ENCODE measurements at regions of chr16 and their contacts with region 1.

Region 1: GRCh38 chr16:48623304-48624016 is 13.5 kb upstream of the N4BP1 start:
- DNase-seq: peak; percentile 84
- ATAC-seq: peak; percentile 96
- H3K4me3 Mint-ChIP-seq: peak overlapping the region; percentile 77
- H3K27ac Mint-ChIP-seq: peak overlapping the region; percentile 73
- H3K4me1 Mint-ChIP-seq: peaks cover 48% of the 10 kb centered on the region
- H3K27me3 Mint-ChIP-seq: no peaks in the 10 kb centered on the region

Region 2: DNA sequence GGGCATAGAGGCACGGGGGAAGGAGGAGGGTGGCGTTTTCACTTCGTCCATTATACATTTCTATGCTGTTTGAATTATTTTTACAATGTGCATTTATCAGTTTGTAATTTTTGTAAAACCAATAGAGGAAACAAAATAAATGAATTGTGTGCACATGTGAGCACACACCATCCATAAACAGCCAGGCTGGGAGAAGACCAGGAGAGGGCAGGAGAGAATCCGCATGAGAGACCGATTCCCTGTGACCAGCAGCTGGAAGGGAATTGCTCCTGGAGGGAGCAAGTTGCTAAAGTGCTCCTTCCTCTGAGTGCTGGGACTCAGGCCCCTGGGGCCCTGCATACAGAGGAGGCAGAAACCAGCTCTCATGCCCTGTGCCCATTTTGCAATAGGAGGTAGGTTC is 593.7 kb before region 1 on chr16:
- CTCF ChIA-PET with region 1: no interaction called
- POLR2A ChIA-PET with region 1: no interaction called
- DNase-seq: no peak
- ATAC-seq: no peak
- H3K4me3 Mint-ChIP-seq: no peak overlapping the region
- H3K27ac Mint-ChIP-seq: no peak overlapping the region
- H3K4me1 Mint-ChIP-seq: no peaks in the 10 kb centered on the region
- H3K27me3 Mint-ChIP-seq: no peaks in the 10 kb centered on the region

Region 3: GRCh38 chr16:48353565-48354163 is 269.8 kb before region 1 on chr16:
- CTCF ChIA-PET with region 1: interaction called, 69 read pairs
- POLR2A ChIA-PET with region 1: no interaction called
- DNase-seq: peak; percentile 80
- ATAC-seq: peak; percentile 90
- H3K4me3 Mint-ChIP-seq: no peak overlapping the region
- H3K27ac Mint-ChIP-seq: peak overlapping the region; percentile 62
- H3K4me1 Mint-ChIP-seq: peaks cover 7% of the 10 kb centered on the region
- H3K27me3 Mint-ChIP-seq: no peaks in the 10 kb centered on the region

Region 4: DNA sequence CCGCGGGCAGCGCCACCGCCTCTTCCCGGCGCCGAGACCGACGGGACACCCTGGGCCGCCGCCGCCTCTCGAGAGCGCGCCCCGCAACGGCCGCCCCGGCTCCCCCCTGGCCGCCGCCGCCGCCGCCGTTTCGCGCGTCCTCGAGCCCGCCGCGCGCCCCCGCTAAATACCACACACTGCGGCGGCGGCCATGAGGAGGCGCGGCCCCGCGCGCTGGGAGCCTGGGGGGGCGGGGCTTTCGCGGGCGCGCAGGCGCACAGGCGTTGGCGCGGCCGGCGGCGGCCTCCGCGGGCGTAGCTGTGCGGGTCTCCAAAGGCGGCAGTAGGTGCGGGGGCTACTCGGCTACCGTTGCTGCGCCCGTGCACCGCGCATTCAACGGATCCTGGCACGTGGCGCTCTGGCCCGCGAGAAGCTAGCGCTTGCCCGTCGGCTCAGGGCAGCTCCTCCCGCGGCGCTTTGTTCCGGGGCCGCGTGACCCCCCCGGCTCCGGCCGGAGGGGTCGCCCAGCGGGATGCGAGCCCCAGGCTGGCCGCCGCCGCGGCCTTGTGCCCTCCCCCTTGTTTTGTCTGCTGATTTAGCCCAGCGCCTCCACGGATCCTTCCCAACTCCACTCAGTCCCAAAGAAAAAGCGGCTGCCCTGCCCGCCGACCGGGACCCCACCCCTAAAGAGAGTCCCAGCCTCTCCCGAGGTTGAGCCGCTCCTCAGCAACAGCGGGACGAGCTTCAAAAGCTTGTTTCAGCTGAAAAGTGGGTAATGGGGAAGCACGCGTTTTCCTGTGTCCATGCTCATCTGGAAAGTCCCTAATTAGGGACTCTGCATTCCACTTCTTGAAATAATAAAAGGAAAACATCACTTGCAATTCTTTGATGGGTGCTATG is 237.9 kb before region 1 on chr16 and contains the start of gene SIAH1:
- CTCF ChIA-PET with region 1: interaction called, 17 read pairs
- POLR2A ChIA-PET with region 1: interaction called, 6 read pairs
- DNase-seq: peak; percentile 87
- ATAC-seq: peak; percentile 85
- H3K4me3 Mint-ChIP-seq: peak within 1 kb of the TSS; percentile 88
- H3K27ac Mint-ChIP-seq: peak within 1 kb of the TSS; percentile 86
- H3K4me1 Mint-ChIP-seq: peaks cover 20% of the 10 kb centered on the region
- H3K27me3 Mint-ChIP-seq: no peaks in the 10 kb centered on the region
- total RNA-seq, gene SIAH1: 14.9 to 15.6 TPM

Region 5: DNA sequence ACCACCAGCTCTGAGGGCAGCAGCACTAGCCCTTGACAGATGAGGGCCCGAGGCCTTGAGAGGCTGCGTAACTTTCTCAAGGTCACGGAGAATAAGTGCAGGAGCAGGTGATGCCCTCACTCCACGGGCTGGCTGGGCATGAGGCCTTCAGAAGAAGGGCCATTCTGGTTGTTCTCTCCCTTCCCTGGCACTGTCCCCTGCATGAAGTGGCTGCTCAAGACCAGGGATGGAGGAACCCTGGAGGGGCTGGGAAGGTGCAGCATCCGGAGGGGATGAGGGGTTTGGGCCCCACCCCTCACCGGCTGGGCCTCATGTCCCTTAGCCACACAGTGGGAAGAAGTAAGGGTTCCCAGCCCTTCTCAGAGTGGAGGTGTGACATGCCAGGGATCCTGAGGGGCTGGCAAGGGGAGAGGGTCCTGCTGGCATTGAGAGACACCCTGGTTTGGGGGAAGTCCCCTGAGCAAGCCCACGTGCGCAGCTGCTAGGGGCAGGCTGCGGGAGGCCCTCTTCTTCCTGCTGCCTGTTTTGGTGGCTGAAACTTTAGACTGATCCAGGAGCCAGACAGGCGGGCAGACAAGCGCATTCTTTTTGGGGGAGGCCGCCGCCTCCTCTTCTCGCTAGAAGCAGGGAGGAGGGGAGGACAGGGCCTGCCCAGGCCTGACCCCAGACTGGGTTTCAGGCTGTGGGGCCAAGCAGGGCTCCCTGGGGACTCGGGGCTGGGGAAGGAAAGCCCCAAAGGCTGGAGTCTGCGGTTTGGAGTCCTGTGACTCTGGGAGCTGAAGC is 87.4 kb before region 1 on chr16:
- CTCF ChIA-PET with region 1: interaction called, 46 read pairs
- POLR2A ChIA-PET with region 1: interaction called, 6 read pairs
- DNase-seq: peak; percentile 32
- ATAC-seq: peak; percentile 38
- H3K4me3 Mint-ChIP-seq: no peak overlapping the region
- H3K27ac Mint-ChIP-seq: peak overlapping the region; percentile 80
- H3K4me1 Mint-ChIP-seq: peaks cover 37% of the 10 kb centered on the region
- H3K27me3 Mint-ChIP-seq: no peaks in the 10 kb centered on the region

Region 6: DNA sequence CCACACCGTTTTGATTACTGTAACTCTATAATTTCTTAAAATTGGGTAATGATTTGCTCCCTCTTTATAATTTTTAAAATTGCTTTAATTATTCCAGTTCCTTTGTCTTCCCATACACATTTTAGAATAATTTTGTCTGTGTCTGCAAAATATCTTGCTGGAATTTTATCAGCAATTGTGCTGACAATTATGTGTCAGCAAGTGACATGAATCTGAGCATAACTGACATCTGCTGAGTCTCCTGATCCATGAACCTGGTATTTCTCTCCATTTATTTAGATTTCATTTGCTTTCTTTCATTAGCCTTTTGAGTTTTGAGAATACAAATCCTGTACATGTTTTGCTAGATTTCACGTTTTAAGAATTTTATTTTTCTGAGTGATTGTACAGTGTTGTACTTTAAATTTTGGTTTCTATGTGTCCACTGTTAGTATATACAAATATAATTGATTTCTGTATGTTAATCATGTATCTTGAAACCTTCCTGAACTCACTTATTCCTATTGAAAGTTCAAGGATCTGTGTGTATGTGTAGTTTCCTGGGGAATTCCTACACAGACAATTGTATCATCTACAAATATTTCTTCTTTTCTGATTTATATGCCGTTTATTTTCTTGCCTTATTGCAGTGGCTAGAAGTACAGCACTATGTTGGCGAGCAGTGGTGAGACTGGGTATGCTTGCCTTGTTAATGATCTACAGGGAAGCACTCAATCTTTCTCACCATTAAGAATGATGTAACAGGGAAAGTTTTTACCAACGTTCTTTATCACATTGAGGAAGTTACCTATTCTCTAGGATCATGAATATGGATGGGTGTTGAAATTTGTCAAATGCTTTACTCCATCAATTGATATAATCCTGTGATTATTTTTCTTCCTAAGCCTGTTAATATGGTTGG is 58.7 kb before region 1 on chr16:
- CTCF ChIA-PET with region 1: interaction called, 52 read pairs
- POLR2A ChIA-PET with region 1: no interaction called
- DNase-seq: no peak
- ATAC-seq: no peak
- H3K4me3 Mint-ChIP-seq: no peak overlapping the region
- H3K27ac Mint-ChIP-seq: peak overlapping the region; percentile 39
- H3K4me1 Mint-ChIP-seq: peaks cover 45% of the 10 kb centered on the region
- H3K27me3 Mint-ChIP-seq: no peaks in the 10 kb centered on the region

Region 7: DNA sequence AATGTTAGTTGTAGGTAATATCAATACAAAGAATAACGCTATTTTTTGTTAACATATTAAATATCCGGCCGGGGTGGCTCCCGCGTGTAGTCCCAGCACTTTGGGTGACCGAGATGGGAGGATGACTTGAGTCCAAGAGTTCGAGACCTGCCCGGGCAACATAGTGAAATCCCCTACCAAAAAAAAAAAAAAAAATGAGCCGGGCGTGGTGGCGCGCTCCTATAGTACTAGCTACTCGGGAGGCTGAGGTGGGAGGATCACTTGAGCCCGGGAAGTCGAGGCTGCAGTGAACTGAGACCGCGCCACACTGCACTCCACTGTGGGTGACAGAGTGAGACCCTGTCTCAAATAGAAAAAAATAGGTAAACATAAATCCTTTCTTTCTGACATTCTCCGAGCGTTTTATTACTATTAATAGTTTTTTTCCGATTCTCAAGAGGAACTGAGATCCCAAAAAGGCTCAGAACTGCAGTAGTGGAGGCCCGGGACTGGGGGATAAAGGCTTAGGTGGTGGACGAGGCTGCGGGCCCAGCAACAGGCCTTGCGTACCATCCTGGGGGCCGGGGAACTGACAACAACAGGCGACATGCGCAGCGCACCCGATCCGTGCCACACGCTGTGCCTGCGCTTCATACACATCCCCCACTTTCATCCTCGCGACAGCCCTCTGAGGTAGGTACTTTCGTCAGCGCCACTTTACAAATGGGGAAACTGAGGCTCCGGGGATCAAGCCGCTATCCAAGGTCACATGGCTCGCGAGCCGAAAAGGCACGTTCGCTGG is 14.4 kb before region 1 on chr16:
- CTCF ChIA-PET with region 1: interaction called, 100 read pairs
- POLR2A ChIA-PET with region 1: interaction called, 33 read pairs
- DNase-seq: peak; percentile 56
- ATAC-seq: peak; percentile 7
- H3K4me3 Mint-ChIP-seq: no peak overlapping the region
- H3K27ac Mint-ChIP-seq: peak overlapping the region; percentile 92
- H3K4me1 Mint-ChIP-seq: peaks cover 35% of the 10 kb centered on the region
- H3K27me3 Mint-ChIP-seq: no peaks in the 10 kb centered on the region

Region 8: GRCh38 chr16:48676836-48677235 is 53.4 kb after region 1 on chr16:
- CTCF ChIA-PET with region 1: no interaction called
- POLR2A ChIA-PET with region 1: no interaction called
- DNase-seq: no peak
- ATAC-seq: no peak
- H3K4me3 Mint-ChIP-seq: no peak overlapping the region
- H3K27ac Mint-ChIP-seq: no peak overlapping the region
- H3K4me1 Mint-ChIP-seq: no peaks in the 10 kb centered on the region
- H3K27me3 Mint-ChIP-seq: no peaks in the 10 kb centered on the region

Region 9: DNA sequence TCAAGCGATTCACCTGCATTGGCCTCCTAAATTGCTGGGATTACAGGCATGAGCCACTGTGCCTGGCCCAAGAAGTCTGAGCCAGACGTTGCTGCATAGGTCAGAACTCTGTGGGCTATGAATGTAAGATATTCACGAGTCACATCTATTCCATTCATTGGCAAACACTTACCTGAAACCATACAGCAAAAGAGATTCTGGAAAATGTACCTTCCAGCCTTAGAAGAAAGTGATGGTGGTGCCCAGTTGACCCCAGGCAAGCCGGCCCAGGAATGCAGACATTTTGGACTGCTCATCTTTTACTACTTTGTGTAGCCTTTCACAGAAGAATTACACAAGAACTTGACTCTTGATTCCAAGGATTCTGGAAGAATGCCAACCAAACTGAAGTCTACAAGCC is 122.1 kb after region 1 on chr16:
- CTCF ChIA-PET with region 1: no interaction called
- POLR2A ChIA-PET with region 1: no interaction called
- DNase-seq: no peak
- ATAC-seq: no peak
- H3K4me3 Mint-ChIP-seq: no peak overlapping the region
- H3K27ac Mint-ChIP-seq: no peak overlapping the region
- H3K4me1 Mint-ChIP-seq: no peaks in the 10 kb centered on the region
- H3K27me3 Mint-ChIP-seq: no peaks in the 10 kb centered on the region